ENCODE measurements at regions of chr12 and their contacts with region 1.

Region 1: DNA sequence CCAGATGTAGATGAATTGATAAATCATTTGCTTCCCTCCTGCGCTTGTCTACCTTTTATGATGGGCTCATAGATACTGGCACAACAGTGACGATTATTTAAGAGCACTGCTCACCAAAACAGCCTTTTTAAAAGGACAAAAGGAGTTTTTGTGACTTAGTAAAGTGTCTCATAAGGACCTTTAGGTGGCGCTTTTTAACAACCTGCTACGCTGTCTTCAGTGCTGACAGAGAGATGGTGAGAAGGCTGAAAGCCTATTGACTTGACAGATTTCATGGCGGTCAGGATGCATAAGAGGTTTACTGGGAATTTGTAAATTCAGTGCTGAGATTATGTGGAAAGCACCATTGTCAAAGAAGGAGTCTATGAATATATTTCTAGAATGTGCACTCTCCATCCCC is 87.6 kb downstream of the SLC15A5 start:
- DNase-seq: peak; percentile 54

Region 2: DNA sequence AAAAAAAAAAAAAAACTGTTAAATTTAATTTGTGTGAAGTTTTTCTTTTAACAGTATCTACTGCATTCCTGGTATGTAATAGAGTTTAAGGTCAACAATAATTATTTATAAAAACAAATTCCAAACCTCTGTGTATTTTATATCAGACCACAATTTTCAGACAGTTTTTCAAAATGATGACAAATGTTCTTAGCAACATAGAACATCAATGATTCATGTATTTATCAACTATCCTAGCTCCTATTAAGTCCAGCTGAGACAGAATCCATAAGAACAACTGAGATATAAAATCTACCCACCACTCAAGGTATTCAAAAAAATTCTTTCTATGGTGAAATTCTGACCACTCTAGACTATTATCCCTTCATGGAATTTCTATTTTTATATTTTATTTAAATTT is 545.1 kb before region 1 on chr12:
- in situ Hi-C with region 1: no loop called
- DNase-seq: no peak

Region 3: DNA sequence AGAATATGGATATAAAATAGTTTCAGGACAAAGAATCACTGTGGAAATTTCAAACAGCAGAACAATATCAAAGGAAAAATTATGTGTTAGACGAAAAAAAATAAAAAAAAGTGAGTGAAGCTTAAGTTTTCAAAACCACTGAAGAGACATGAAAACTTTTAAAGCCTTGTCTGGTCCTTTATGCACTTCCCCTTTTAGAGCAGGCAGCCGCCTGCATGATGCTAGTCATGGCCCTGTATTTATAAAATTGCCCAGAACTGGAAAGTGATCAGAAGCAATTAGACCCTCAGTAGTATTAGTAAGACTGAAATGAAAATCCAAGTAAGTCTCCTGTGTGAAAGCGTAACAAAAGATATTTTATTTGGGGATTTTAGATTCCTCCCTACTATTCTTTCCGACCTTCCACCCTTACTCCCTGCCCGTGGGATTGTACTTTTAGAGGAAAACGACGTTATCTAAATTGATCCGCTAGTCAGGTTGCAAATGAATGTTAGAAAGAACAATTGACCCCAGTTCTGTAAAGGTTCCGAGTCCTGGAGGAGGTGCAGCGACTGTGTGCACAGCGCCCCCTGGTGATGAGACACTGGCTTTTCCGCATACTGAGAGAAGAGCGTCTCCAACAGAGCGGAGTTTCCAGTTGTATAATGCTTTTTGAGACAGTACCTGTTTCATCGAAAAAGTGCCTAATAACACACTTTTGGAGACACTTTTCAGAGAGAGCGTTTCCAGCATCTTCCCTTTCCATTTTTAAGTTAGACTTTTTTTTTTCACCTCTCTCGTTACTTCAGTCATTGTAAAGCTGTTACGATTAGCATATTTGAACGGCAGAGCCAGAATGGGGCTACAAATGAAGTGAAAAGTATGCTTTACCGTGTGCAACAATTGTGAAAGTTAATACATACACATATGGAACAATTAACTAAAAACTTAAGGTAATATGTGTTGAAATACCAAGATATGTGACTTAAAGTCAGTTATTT is 170.0 kb after region 1 on chr12:
- in situ Hi-C with region 1: loop called (anchors 25 kb)
- DNase-seq: peak; percentile 64